ENCODE measurements at regions of chr12 and their contacts with region 1.

Region 1: GRCh38 chr12:121334513-121335343 is 17.5 kb downstream of the ANAPC5 start:
- DNase-seq: no peak
- H3K4me3 ChIP-seq: no peak overlapping the region
- H3K27ac ChIP-seq: no peak overlapping the region
- H3K4me1 ChIP-seq: no peaks in the 10 kb centered on the region
- H3K27me3 ChIP-seq: no peaks in the 10 kb centered on the region
- CTCF ChIP-seq: peak; percentile 81 to 84

Region 2: GRCh38 chr12:120833849-120834248 is 500.9 kb before region 1 on chr12:
- intact Hi-C with region 1: no loop called
- DNase-seq: no peak
- H3K4me3 ChIP-seq: no peak overlapping the region
- H3K27ac ChIP-seq: peak overlapping the region; percentile 8 to 39
- H3K4me1 ChIP-seq: peaks cover 0 to 71% (median 43%) of the 10 kb centered on the region in 4 donors
- H3K27me3 ChIP-seq: no peaks in the 10 kb centered on the region
- CTCF ChIP-seq: no peak

Region 3: DNA sequence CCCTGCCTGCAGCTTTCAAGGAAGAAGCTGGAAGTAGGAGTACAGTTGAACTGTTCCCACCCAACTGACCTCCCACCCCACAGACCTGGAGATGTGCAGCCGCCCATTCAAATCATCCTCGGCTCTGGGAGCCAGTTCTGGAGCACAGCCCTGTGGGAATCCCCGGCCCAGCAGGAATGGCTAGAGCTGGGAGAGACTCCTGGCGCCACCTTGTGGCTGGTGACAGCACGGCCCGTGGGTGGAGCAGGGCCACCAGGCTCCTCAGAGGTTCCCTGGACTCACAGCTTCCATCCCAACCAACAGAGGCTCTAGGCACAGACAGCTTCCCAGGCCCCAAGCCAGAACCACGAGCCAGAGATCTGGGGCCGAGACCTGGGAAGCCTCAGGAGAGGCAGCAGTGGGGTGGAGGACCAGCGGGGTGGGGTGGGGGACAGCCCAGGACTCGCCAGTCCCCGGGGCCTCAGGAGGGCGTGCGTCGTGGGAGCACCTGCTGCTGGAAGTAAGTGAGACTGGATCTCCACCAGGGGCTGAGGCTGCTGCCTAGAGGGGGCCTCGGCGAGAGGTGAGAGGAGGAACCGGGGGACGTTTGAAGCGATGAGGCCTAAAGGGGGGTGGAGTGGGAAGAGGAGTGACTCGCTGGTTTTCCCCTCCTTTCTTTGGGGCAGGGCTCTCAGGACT is 108.6 kb after region 1 on chr12:
- intact Hi-C with region 1: loop called (anchors 5 kb)
- DNase-seq: peak; percentile 78 to 88
- H3K4me3 ChIP-seq: no peak overlapping the region
- H3K27ac ChIP-seq: no peak overlapping the region
- H3K4me1 ChIP-seq: peaks cover 0 to 19% (median 5%) of the 10 kb centered on the region in 4 donors
- H3K27me3 ChIP-seq: no peaks in the 10 kb centered on the region
- CTCF ChIP-seq: peak; percentile 78 to 89